ENCODE measurements at regions of chr14 and their contacts with region 1.

Region 1: DNA sequence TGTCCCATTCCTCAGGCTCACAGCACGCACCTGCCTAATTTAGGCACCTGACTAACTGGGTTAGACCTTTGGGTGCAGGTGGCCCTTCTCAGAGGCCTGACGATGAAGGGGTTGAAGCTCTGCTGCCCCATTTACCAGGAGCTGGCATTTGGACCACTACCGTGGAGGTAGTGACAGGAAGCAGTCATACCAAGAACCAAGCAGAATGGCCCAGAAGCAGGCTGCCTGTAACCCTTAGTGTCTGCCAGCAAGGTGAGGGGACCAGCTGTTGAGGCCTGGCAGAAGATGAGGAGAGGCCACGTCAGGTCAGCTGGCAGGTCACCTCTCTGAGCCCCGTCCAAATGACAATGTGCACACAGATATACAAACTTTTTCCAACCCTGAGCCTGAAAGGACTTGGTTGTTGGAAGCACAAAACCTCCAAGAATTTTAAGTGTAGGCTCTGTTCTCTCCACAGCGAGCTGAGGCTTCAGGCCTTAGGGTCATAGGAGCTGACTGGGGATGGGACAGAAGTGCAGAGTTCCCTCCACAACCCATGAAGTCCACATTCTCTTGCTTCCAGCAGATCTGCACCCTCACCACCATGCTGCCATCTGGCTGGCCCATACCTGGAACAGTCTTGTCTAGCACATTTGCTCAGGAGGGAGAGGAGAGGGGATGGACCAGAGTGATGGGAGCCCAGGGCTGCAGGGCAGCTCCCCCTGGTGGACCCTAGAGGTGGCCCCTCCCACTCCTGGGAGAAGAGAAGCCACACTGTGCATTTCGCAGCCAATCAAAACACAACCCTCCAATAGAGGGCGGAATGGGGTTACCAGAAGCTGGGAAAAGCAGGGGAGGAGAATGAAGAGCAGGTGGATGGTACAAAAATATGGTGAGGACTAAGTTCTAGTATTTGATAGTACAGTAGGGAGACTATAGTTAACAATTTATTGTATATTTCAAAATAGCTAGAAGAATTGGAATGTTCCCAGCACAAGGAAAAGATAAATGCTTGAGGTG is 23.3 kb downstream of the VASH1 start:
- DNase-seq: peak; percentile 48 to 59
- H3K4me3 ChIP-seq: no peak overlapping the region
- H3K27ac ChIP-seq: peak overlapping the region in 1 of 3 donors; percentile 1
- H3K4me1 ChIP-seq: no peaks in the 10 kb centered on the region
- H3K27me3 ChIP-seq: no peaks in the 10 kb centered on the region
- CTCF ChIP-seq: peak in 5 of 6 experiments; percentile 26 to 64 (median 42)
- POLR2A ChIP-seq: no peak

Region 2: DNA sequence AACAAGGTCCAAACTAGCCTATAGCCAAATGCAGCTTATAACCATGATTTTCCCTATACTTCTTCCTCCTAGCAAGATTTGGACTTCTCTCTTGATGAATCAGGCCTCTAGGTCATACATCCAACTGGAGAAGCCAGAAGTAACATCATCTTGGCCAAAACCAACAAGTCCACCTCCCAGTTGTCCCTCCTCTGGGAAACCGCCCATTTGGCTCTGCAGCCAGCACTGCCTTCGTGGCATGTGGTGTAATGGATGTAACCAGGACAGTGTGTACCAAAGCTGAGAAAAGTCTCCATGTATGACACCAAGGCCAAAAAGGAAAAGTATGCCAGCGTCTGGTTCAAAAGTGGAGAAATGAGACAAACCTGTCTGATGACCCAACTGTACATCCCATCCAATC is 82.6 kb before region 1 on chr14:
- intact Hi-C with region 1: loop called (anchors 10 kb)
- DNase-seq: peak; percentile 8 to 18
- H3K4me3 ChIP-seq: no peak overlapping the region
- H3K27ac ChIP-seq: no peak overlapping the region
- H3K4me1 ChIP-seq: no peaks in the 10 kb centered on the region
- H3K27me3 ChIP-seq: no peaks in the 10 kb centered on the region
- CTCF ChIP-seq: no peak
- POLR2A ChIP-seq: no peak